ENCODE measurements at regions of chr17 and their contacts with region 1.

Region 1: GRCh38 chr17:78865682-78866390 is 25.2 kb upstream of the USP36 start:
- DNase-seq: peak; percentile 89
- H3K4me3 ChIP-seq: no peak overlapping the region
- H3K27ac ChIP-seq: no peak overlapping the region
- H3K4me1 ChIP-seq: peaks cover 22% of the 10 kb centered on the region
- H3K27me3 ChIP-seq: no peaks in the 10 kb centered on the region
- CTCF ChIP-seq: peak; percentile 92 to 93
- POLR2A ChIP-seq: no peak

Region 2: GRCh38 chr17:78759203-78759968 is 106.5 kb before region 1 on chr17:
- CTCF ChIA-PET with region 1: no interaction called
- POLR2A ChIA-PET with region 1: no interaction called
- dilution Hi-C with region 1: no loop called
- intact Hi-C with region 1: no loop called
- DNase-seq: peak; percentile 46
- H3K4me3 ChIP-seq: no peak overlapping the region
- H3K27ac ChIP-seq: no peak overlapping the region
- H3K4me1 ChIP-seq: peaks cover 17% of the 10 kb centered on the region
- H3K27me3 ChIP-seq: no peaks in the 10 kb centered on the region
- CTCF ChIP-seq: no peak
- POLR2A ChIP-seq: no peak

Region 3: DNA sequence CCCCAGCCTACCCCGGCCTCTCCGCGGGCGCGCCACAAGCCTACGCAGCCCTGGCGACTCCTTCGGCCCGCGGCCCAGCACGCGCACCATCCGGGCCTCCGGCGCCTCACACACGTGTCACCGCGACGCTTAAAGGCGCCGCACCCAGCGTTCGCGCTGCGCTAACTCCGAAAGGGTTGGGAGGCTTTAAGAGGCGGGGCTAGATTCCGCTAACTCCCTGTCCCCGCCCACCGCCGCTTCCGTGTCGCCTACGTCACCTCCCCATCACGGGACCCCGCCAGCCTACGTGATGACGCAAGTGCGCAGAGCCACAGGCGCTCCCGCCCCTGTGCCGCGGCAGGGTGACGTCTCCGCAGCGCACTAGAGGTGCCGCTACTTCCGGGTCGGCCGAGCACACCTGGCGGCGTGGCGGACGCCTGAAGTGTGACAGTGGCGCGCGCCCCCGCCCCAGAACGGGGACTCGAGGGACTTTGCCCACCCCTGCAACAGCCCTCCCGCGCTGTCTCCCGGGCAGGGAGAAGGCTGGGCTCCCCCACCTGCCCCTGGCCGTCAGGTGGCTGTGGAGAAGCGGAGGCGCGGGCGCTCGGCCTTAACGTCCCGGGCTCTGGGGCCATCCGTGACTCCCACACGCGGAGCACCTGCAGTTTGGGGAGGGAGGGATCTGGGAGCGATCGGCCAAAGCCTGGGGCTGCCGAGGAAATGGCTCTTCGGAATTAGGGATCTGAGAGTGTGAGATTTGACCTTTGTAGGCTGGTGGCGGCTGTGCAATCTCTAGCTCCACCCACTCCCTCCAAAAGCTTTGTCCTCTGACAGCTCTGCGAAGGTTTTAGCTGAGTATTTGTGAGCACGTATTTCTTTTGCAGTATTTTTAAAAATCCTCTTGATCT is 24.9 kb before region 1 on chr17 and contains the start of gene USP36:
- CTCF ChIA-PET with region 1: interaction called, 8 read pairs
- POLR2A ChIA-PET with region 1: no interaction called
- dilution Hi-C with region 1: no loop called
- intact Hi-C with region 1: loop called (anchors 2 kb)
- DNase-seq: peak; percentile 99
- H3K4me3 ChIP-seq: peak within 1 kb of the TSS; percentile 64 to 72 (median 68)
- H3K27ac ChIP-seq: peak within 1 kb of the TSS; percentile 81
- H3K4me1 ChIP-seq: peaks cover 16% of the 10 kb centered on the region
- H3K27me3 ChIP-seq: no peaks in the 10 kb centered on the region
- CTCF ChIP-seq: no peak
- POLR2A ChIP-seq: peak; percentile 56
- total RNA-seq, gene USP36: 46.6 and 49.8 TPM in 2 replicates

Region 4: GRCh38 chr17:78896091-78896833 is 30.4 kb after region 1 on chr17:
- CTCF ChIA-PET with region 1: interaction called, 26 read pairs
- POLR2A ChIA-PET with region 1: no interaction called
- dilution Hi-C with region 1: no loop called
- intact Hi-C with region 1: no loop called
- DNase-seq: no peak
- H3K4me3 ChIP-seq: no peak overlapping the region
- H3K27ac ChIP-seq: no peak overlapping the region
- H3K4me1 ChIP-seq: no peaks in the 10 kb centered on the region
- H3K27me3 ChIP-seq: no peaks in the 10 kb centered on the region
- CTCF ChIP-seq: no peak
- POLR2A ChIP-seq: no peak

Region 5: DNA sequence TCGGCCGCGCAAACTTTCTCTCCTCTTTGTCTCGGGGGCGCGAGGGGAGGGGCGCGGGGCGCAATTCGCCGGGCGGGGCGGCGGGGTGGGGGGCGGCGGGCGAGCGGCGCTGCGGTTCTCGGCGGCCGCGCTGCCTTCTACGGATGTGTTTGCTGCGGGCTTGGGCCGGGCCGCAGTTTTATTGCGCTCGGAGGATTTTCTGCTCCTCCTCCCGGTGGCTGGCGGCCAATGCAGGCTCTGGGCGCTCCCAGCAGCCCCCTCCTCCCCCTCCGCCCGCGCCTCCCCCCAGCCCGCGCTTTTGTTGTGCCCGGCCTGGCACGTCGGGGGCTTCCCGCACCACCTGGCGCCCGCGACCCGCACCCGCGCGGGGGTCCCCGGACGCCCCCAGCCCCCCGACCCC is 59.4 kb after region 1 on chr17 and contains the start of gene TIMP2:
- CTCF ChIA-PET with region 1: interaction called, 16 read pairs
- POLR2A ChIA-PET with region 1: no interaction called
- dilution Hi-C with region 1: no loop called
- intact Hi-C with region 1: loop called (anchors 2 kb)
- DNase-seq: peak; percentile 86
- H3K4me3 ChIP-seq: peak within 1 kb of the TSS; percentile 54 to 78 (median 59)
- H3K27ac ChIP-seq: peak within 1 kb of the TSS; percentile 64
- H3K4me1 ChIP-seq: peaks cover 13% of the 10 kb centered on the region
- H3K27me3 ChIP-seq: no peaks in the 10 kb centered on the region
- CTCF ChIP-seq: peak in 1 of 2 donors; percentile 20
- POLR2A ChIP-seq: peak; percentile 83
- total RNA-seq, gene TIMP2: 280 and 318 TPM in 2 replicates

Region 6: GRCh38 chr17:78960928-78961327 is 95.1 kb after region 1 on chr17:
- CTCF ChIA-PET with region 1: interaction called, 171 read pairs
- POLR2A ChIA-PET with region 1: no interaction called
- dilution Hi-C with region 1: no loop called
- intact Hi-C with region 1: no loop called
- DNase-seq: no peak
- H3K4me3 ChIP-seq: no peak overlapping the region
- H3K27ac ChIP-seq: no peak overlapping the region
- H3K4me1 ChIP-seq: no peaks in the 10 kb centered on the region
- H3K27me3 ChIP-seq: no peaks in the 10 kb centered on the region
- CTCF ChIP-seq: no peak
- POLR2A ChIP-seq: no peak